Posterior cingulate gyrus (tissue), 11 donors: ENCODE measurements at regions of chr15 and their contacts with region 1.

Region 1: DNA sequence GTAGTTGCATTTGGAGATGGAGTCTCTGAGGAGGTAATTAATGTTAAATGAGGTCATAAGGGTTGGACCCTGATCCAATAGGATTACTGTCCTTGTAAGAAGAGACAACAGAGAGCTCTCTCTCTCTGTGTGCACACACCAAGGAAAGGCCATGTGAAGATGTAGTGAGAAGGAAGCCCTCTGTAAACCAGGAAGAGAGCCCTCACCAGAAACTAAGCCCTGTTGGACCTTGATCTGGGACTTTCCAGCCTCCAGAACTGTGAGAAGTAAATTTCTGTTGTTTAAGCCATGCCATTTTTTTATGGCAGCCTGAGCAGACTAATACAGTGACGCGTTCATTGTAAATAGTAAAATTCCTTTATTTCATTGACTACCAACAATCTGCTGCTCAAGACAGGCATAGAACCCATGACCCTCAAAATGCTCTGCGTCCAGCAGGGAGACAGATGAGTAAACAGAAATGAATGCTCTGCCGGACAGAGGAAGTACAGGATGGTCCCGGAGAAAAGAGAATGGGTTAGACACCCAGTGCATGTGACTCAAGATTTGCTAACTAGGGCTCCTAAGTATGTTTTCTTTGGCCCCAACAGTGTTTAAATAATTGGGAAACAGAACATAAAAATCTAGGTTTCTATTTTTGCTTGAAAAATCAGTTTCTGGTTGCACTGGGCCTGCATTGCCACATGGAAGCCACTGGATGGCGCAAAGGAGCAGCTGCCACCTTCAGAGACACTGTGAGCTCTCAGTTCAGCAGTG is 37.9 kb upstream of the TNFAIP8L3 start:
- DNase-seq: peak in 7 of 10 donors; percentile 40 to 94 (median 54)

Region 2: DNA sequence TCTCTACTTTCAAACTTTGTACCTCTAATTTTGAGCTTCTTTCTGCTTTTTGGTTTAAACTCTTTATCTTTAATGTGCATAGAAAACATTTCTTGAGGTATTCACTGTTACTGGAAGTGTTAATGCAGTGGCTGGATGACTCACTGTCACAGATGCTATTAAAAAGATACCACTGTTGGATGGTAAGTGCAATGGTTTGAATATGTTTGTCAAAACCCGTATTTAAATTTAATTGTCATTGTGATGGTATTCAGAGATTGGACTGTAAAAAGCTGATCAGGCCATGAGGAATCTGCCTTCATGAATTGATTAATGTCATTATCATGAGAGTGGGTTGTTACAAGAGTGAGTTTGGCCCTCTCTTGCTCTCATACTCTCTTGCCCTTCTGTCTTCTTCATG is 153.5 kb before region 1 on chr15:
- intact Hi-C with region 1: no loop called
- DNase-seq: no peak

Region 3: DNA sequence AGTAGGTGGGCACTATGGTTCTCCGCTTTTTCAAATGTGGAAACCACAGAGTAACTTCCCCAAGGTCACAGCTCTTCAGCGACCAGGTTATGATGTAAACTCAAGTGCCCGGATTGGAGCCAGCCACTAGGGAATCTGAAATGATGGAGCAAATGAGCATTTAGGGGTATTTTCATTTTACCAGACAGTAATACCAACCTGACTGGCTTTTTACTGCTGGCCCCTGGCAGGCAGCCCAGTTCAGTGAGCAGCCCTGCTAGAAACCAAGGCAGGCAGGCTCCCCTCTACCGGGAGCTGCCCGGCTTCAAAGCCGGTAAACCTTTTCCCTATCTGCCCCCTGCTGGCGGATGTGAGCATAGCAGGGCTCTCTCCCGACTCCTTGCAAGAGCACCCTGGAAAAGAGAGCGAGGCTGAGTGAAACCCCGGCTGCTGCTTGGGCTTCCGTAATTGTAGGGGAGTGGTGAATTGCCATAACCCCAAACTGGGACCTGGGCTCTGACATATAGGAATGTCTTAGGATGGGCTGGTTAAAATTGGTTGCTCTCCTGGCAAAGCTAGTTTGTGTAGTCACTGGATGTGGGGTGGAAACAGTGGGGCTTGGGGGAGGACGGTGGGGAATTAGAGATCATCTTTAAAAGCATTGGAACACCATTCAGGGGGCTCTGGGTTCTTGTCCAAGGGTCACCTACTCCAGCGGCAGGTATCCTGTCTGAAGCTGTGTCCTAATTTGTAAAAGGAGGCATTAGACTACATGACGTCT is 60.1 kb after region 1 on chr15:
- intact Hi-C with region 1: loop called (anchors 5 kb)
- DNase-seq: peak; percentile 82 to 99 (median 96)